Dorsolateral prefrontal cortex (tissue), 120 donors: ENCODE measurements at regions of chr7 and their contacts with region 1.

Region 1: DNA sequence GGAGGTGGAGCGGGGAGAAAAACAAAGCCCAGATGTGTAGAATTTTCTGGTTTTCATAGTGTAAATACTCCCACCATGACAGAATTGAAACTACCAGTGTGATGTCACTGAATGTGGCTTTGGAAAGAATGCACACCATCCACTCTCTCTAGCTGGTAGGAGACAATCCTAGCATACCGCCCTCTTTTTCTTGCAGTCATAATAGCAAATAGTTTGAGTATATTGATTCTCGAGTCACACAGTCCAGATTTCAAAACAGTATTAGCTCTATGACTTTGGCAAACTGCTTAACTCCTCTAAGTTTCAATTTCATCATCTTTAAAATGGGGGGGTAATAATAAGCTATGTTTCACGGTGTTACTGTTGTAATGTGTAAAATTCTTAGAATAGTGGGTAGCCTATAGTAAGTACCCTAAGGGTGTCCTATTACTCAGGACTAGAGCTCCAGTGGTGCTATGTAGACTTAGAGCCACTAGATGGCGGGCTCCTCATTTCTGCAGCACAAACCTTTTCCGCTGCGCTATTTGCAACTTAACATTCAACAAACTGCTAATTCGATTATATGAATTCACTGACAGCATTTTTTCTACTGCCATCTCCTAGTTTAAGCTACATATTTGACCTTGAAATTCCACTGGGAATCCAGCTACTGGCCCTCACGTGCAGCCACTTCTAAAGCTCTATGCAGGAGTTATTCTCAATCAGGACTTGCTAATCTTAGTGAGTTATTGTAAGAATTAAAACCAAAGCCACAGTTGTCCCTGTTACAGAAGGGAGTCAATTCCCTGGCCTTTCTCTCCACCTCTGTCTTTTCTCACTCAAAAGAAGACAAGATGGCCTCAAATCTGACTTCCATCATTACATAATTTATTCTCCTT is 18.7 kb downstream of the TAS2R40 start:
- DNase-seq: peak; percentile 48 to 83 (median 68)
- H3K4me3 ChIP-seq: peak overlapping the region in 19 of 59 donors; percentile 5 to 47 (median 17)
- H3K27ac ChIP-seq: peak overlapping the region in 13 of 59 donors; percentile 1 to 80 (median 41)
- H3K27me3 ChIP-seq: no peaks in the 10 kb centered on the region
- CTCF ChIP-seq: peak; percentile 81 to 99 (median 95)

Region 2: GRCh38 chr7:143372070-143372469 is 131.5 kb after region 1 on chr7:
- intact Hi-C with region 1: loop called (anchors 5 to 10 kb)
- DNase-seq: peak in 9 of 10 donors; percentile 73 to 95 (median 87)
- H3K4me3 ChIP-seq: peak overlapping the region in 5 of 59 donors; percentile 2 to 22 (median 13)
- H3K27ac ChIP-seq: peak overlapping the region in 58 of 59 donors; percentile 27 to 93 (median 86)
- H3K27me3 ChIP-seq: no peaks in the 10 kb centered on the region
- CTCF ChIP-seq: peak in 55 of 56 donors; percentile 8 to 85 (median 60)